PC-9 (cell line): ENCODE measurements at regions of chr1 and their contacts with region 1.

Region 1: DNA sequence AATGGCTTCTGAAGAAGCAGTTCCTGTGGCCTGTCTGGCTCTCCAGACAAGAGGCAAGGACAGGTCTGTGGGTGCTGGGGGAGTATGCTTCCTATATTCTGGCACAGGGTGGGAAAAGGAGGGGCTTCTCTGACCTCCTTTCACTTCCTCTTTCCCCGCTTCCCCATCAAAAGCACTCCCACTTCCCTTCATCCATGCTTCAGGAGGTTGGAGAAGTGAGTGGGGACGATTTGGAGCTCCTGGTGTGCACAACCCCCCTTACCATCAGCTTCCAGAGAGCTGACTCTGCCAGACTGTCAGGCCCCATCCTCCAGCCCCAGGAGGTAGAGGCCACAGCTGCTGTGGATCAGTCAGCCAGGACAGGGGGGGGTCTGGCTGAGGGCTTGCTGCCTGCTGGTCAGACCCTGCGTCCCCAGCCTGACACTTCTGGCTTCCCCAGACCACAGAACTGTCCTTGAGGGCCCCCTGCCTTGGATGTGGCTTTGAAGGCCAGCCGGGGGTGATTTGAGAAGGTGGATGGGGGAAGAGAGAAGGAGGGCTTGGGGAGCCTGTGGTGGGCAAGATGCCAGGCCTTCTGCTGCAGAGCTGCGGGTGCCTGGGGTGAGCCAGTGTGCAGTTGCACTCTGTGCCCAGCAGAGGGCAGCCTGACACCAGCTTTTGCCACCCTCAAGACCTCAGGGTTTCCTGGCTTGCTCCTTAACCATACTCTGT is 21.5 kb upstream of the TMEM222 start:
- DNase-seq: peak; percentile 43 to 80
- H3K4me3 ChIP-seq: no peak overlapping the region
- H3K27ac ChIP-seq: no peak overlapping the region
- H3K4me1 ChIP-seq: no peaks in the 10 kb centered on the region
- H3K27me3 ChIP-seq: no peaks in the 10 kb centered on the region
- CTCF ChIP-seq: peak; percentile 88

Region 2: GRCh38 chr1:26645734-26646133 is 654.8 kb before region 1 on chr1:
- CTCF ChIA-PET with region 1: no interaction called
- POLR2A ChIA-PET with region 1: no interaction called
- intact Hi-C with region 1: no loop called
- DNase-seq: no peak
- H3K4me3 ChIP-seq: no peak overlapping the region
- H3K27ac ChIP-seq: no peak overlapping the region
- H3K4me1 ChIP-seq: no peaks in the 10 kb centered on the region
- H3K27me3 ChIP-seq: no peaks in the 10 kb centered on the region
- CTCF ChIP-seq: no peak

Region 3: DNA sequence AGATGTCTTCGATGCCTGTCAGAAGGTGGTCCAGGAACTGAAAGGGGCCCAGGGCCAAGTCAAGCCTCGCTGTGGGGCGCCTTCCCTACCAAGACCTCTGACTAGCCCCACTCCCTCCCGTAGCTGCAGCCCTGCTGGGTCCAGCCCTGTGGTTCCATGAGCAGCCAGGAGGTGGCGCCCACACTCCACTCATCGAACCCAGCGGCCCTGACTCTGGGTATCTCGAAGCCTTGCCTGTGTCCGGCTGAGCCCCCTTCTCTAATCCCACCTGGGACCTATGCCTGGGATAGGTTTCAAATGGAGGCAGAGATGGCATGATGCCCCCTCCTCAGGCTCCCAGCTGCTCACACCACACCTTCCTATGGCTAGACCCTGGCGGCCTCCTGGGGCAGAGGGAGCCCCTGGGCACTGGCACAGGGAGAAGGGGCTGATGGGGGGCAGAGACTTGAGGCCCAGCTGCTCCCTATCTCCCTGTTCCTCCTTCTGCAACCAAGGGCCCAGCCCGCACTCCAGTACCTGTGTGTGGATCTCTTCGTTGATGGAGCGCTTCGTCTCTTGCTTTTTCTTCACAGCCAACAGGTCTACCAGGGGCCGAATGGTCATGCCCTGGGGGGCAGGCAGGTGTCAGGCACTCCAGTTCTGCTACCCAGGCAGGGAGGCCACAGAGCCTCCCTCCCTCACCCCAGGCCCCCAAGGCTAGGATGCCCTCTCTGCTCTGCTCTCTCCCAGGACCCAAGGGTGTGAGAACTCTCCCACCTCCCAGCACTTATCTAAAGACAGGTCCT is 197.6 kb before region 1 on chr1:
- CTCF ChIA-PET with region 1: interaction called, 3 read pairs
- POLR2A ChIA-PET with region 1: no interaction called
- intact Hi-C with region 1: loop called (anchors 1 kb)
- DNase-seq: peak in 1 of 2 experiments; percentile 71
- H3K4me3 ChIP-seq: no peak overlapping the region
- H3K27ac ChIP-seq: no peak overlapping the region
- H3K4me1 ChIP-seq: 0 out of 2 replicates have a peak, but pooled peaks cover 12% of the 10 kb centered on the region
- H3K27me3 ChIP-seq: no peaks in the 10 kb centered on the region
- CTCF ChIP-seq: peak; percentile 93

Region 4: GRCh38 chr1:27388337-27389005 is 88.0 kb after region 1 on chr1:
- CTCF ChIA-PET with region 1: interaction called, 7 read pairs
- POLR2A ChIA-PET with region 1: no interaction called
- intact Hi-C with region 1: loop called (anchors 1 kb)
- DNase-seq: peak; percentile 55 to 71
- H3K4me3 ChIP-seq: no peak overlapping the region
- H3K27ac ChIP-seq: no peak overlapping the region
- H3K4me1 ChIP-seq: no peaks in the 10 kb centered on the region
- H3K27me3 ChIP-seq: no peaks in the 10 kb centered on the region
- CTCF ChIP-seq: peak; percentile 87

Region 5: DNA sequence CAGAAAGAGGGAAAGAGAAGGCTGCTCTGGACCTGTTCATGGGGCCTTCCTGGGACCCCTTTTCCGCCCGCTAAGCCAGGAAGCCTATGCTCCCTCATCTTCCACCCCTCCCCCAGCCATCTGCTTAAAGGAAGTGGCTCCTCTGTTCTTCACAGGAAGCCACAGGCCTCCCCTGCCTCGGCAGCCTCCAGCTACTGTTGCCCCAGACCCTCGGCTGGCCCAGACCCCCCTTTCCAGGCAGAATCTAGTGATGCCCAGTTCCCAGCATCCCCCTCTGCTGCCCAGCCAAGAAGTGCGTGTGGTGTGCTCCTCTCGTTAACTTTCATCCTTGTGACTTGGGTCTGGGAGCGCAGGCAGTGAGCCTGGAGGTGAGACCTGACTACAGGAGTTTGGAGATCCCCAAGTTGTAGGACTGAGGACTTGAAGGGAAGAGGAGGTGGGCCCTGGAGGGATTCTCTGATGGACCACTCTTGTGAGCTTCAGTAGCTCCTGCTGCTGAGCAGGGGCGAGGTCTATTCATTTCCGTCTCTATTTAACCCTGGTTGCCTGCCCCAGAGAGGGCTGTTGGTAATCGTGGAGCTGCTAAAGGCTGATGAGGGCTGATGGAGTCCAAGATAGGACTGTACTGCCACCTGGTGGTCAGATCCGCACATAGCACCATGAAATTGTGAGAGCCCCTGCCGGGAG is 362.4 kb after region 1 on chr1:
- CTCF ChIA-PET with region 1: interaction called, 3 read pairs
- POLR2A ChIA-PET with region 1: no interaction called
- intact Hi-C with region 1: loop called (anchors 2 kb)
- DNase-seq: peak; percentile 53 to 78
- H3K4me3 ChIP-seq: no peak overlapping the region
- H3K27ac ChIP-seq: no peak overlapping the region
- H3K4me1 ChIP-seq: peaks cover 9% of the 10 kb centered on the region; the same call in 1 of the 2 replicates
- H3K27me3 ChIP-seq: no peaks in the 10 kb centered on the region
- CTCF ChIP-seq: peak; percentile 84

Region 6: GRCh38 chr1:28815533-28816185 is 1515.2 kb after region 1 on chr1:
- CTCF ChIA-PET with region 1: no interaction called
- POLR2A ChIA-PET with region 1: no interaction called
- intact Hi-C with region 1: no loop called
- DNase-seq: no peak
- H3K4me3 ChIP-seq: no peak overlapping the region
- H3K27ac ChIP-seq: no peak overlapping the region
- H3K4me1 ChIP-seq: no peaks in the 10 kb centered on the region
- H3K27me3 ChIP-seq: peaks cover 18% of the 10 kb centered on the region
- CTCF ChIP-seq: no peak